Activated CD4-positive, alpha-beta memory T cell treated with anti-CD3 and anti-CD28 coated beads for 36 hours (primary cell): ENCODE measurements at regions of chr11 and their contacts with region 1.

Region 1: GRCh38 chr11:32960553-32961164 is 55.0 kb upstream of the DEPDC7 start:
- DNase-seq: no peak
- H3K4me3 Mint-ChIP-seq: no peak overlapping the region
- H3K27ac Mint-ChIP-seq: no peak overlapping the region
- H3K4me1 Mint-ChIP-seq: peaks cover 9% of the 10 kb centered on the region
- H3K27me3 Mint-ChIP-seq: no peaks in the 10 kb centered on the region

Region 2: DNA sequence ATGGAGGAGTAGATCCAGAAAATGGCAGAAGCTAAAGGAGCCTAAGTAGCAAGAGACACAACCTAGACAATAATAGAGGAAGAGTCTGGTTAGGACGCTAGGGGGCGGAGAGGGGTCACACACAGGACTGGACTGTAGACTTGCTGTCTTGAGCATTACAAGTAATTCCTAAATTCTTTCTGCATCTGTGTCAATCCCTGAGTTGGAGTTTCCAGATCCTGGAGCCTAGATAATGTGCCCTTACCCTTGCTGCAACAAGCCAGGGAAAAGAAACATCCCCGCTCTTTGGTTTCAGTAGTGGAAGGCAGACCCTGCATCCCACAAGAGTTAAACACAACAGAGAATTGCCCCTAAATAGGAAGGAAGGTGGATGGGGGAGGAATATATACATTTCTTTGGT is 151.3 kb before region 1 on chr11:
- CTCF ChIA-PET with region 1: no interaction called
- POLR2A ChIA-PET with region 1: no interaction called
- intact Hi-C with region 1: loop called (anchors 5 kb)
- DNase-seq: peak; percentile 71
- H3K4me3 Mint-ChIP-seq: no peak overlapping the region
- H3K27ac Mint-ChIP-seq: no peak overlapping the region
- H3K4me1 Mint-ChIP-seq: no peaks in the 10 kb centered on the region
- H3K27me3 Mint-ChIP-seq: no peaks in the 10 kb centered on the region

Region 3: DNA sequence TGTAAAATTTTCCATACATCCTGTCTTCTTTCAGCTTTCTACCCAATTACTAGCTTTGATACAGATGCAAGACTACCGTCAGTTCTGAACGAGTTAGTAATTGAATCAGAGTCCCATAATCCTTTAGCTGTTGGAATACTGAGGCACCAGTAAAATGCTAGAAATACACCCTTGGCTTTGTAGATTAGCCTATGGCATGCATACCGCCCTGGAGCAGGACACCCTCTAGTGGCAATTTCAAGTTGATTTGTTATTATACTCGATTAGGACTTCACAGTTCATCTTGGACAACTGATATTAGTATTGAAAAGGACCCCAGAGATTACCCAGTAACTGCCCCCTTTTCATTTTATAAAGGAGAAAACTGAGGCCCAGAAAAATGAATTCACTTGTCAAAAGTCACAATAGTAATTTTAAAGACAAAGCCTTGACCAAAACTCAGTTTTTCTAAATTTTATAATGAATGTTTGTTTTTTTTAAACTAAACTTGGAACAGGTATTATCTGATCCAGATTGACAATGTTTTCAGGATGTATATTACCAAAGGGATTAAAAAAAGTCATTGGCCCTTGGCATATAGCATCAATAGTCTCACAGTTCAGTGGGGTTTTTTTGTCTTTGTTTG is 369.2 kb after region 1 on chr11:
- CTCF ChIA-PET with region 1: no interaction called
- POLR2A ChIA-PET with region 1: no interaction called
- intact Hi-C with region 1: loop called (anchors 10 kb)
- DNase-seq: peak; percentile 55
- H3K4me3 Mint-ChIP-seq: no peak overlapping the region
- H3K27ac Mint-ChIP-seq: no peak overlapping the region
- H3K4me1 Mint-ChIP-seq: peaks cover 14% of the 10 kb centered on the region
- H3K27me3 Mint-ChIP-seq: no peaks in the 10 kb centered on the region